Mammary epithelial cell (primary cell): ENCODE measurements at regions of chr2 and their contacts with region 1.

Region 1: GRCh38 chr2:205245652-205246051 is 436.6 kb upstream of the NRP2 start:
- DNase-seq: peak; percentile 6
- H3K4me3 ChIP-seq: no peak overlapping the region
- H3K27ac ChIP-seq: no peak overlapping the region
- H3K4me1 ChIP-seq: no peaks in the 10 kb centered on the region
- H3K27me3 ChIP-seq: no peaks in the 10 kb centered on the region
- CTCF ChIP-seq: no peak

Region 2: DNA sequence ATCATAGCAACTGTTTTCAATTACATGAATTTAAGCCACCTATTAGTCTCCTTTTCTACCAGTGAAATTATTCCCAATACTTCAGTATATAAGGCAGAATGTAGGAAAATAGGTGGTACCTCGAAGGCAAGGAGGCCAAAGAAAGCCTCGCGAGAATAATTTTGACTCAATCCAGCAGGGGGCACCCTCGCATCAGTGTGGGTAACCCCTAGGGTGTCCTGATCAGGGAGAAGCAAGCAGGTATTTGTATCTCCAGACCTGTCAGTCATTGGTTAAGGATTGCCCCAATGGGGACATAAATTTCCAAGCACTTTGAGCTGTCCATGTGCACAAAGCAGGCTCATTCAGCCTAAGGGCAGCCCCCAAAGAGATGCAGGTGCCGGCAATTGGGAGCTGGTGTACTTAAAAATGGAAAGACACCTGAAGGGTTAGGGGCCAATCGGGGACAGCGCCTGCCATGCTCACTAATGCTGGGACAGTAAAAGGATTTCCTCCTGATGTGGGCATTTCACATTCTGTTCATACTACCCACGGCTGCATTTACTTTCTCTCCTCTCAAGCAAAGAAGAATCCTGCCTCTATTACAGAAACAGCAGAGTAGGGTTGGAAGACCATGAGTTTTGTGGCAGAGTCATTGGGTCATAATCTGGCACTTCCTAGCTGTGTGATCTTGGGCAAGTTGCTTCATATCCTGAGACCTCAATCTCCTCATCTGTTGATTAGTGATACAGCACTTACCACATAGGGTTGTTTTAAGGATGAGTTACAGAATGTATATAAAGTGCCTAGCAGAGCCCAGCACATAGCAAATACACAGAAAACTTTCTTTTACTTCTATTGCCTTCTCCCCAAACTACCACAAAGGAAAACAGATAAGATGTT is 1173.0 kb before region 1 on chr2:
- CTCF ChIA-PET with region 1: no interaction called
- dilution Hi-C with region 1: no loop called
- in situ Hi-C with region 1: no loop called
- intact Hi-C with region 1: loop called (anchors 5 kb)
- DNase-seq: peak; percentile 9
- H3K4me3 ChIP-seq: no peak overlapping the region
- H3K27ac ChIP-seq: no peak overlapping the region
- H3K4me1 ChIP-seq: peaks cover 5% of the 10 kb centered on the region
- H3K27me3 ChIP-seq: peaks cover 5% of the 10 kb centered on the region
- CTCF ChIP-seq: peak; percentile 27 to 34

Region 3: DNA sequence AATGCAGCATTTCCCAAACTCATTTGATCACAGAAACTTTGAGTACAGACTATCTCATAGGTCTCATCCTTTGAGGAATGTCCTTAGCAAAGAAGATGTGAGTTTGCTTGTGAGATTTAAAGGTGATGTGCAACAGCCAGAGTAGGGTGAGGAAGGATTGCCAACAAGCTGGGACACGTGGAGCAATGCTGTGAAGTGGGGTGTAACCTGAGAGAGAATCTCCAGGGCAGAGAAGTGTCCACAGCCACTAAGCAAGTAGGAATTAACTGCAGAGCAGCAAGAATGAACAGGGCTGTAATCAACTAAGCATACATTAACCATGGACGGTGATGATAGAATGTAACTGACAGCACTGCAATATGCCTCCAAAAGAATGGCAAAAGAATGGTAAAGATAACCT is 33.3 kb before region 1 on chr2:
- CTCF ChIA-PET with region 1: no interaction called
- dilution Hi-C with region 1: no loop called
- in situ Hi-C with region 1: no loop called
- intact Hi-C with region 1: no loop called
- DNase-seq: peak; percentile 41
- H3K4me3 ChIP-seq: no peak overlapping the region
- H3K27ac ChIP-seq: no peak overlapping the region
- H3K4me1 ChIP-seq: no peaks in the 10 kb centered on the region
- H3K27me3 ChIP-seq: no peaks in the 10 kb centered on the region
- CTCF ChIP-seq: no peak